ENCODE measurements at regions of chr1 and their contacts with region 1.

Region 1: GRCh38 chr1:212463565-212464285 is 31.0 kb downstream of the NENF start:
- DNase-seq: no peak
- ATAC-seq: no peak
- H3K4me3 ChIP-seq: no peak overlapping the region
- H3K27ac ChIP-seq: no peak overlapping the region
- H3K4me1 ChIP-seq: no peaks in the 10 kb centered on the region
- H3K27me3 ChIP-seq: peaks cover 9% of the 10 kb centered on the region; the same call in 1 of the 2 replicates
- CTCF ChIP-seq: no peak
- POLR2A ChIP-seq: no peak
- RAD21 ChIP-seq: no peak

Region 2: GRCh38 chr1:212488397-212489283 is 24.9 kb after region 1 on chr1:
- CTCF ChIA-PET with region 1: no interaction called
- POLR2A ChIA-PET with region 1: no interaction called
- dilution Hi-C with region 1: no loop called
- in situ Hi-C with region 1: no loop called
- intact Hi-C with region 1: no loop called
- DNase-seq: peak; percentile 97
- ATAC-seq: peak; percentile 15
- H3K4me3 ChIP-seq: no peak overlapping the region
- H3K27ac ChIP-seq: peak overlapping the region; percentile 40; the same call in 1 of the 2 replicates
- H3K4me1 ChIP-seq: peaks cover 15% of the 10 kb centered on the region
- H3K27me3 ChIP-seq: no peaks in the 10 kb centered on the region
- CTCF ChIP-seq: no peak
- POLR2A ChIP-seq: no peak
- RAD21 ChIP-seq: 0 out of 2 replicates have a peak, but pooled peaks have one; percentile 5

Region 3: GRCh38 chr1:212718499-212718898 is 254.8 kb after region 1 on chr1:
- CTCF ChIA-PET with region 1: no interaction called
- POLR2A ChIA-PET with region 1: interaction called, 12 read pairs
- dilution Hi-C with region 1: no loop called
- in situ Hi-C with region 1: no loop called
- intact Hi-C with region 1: no loop called
- DNase-seq: peak; percentile 43
- ATAC-seq: no peak
- H3K4me3 ChIP-seq: no peak overlapping the region
- H3K27ac ChIP-seq: no peak overlapping the region
- H3K4me1 ChIP-seq: peaks cover 8% of the 10 kb centered on the region; the same call in 1 of the 2 replicates
- H3K27me3 ChIP-seq: no peaks in the 10 kb centered on the region
- CTCF ChIP-seq: 0 out of 2 replicates have a peak, but pooled peaks have one; percentile 24
- POLR2A ChIP-seq: no peak
- RAD21 ChIP-seq: peak; percentile 34

Measured in IMR-90 (cell line).